ENCODE measurements at regions of chr16 and their contacts with region 1.

Region 1: GRCh38 chr16:50520451-50521245 is 27.5 kb upstream of the NKD1 start:
- DNase-seq: peak; percentile 99
- ATAC-seq: peak; percentile 94
- H3K4me3 ChIP-seq: no peak overlapping the region; a peak in 1 of 6 replicates
- H3K27ac ChIP-seq: peak overlapping the region; percentile 89
- H3K4me1 ChIP-seq: peaks cover 65% of the 10 kb centered on the region
- H3K27me3 ChIP-seq: no peaks in the 10 kb centered on the region
- CTCF ChIP-seq: no peak
- EP300 ChIP-seq: peak; percentile 98 to 100; a peak in 3 of 4 replicates
- POLR2A ChIP-seq: peak in 1 of 2 experiments; percentile 32; a peak in 2 of 4 replicates
- RAD21 ChIP-seq: no peak

Region 2: GRCh38 chr16:50425648-50426047 is 95.0 kb before region 1 on chr16:
- CTCF ChIA-PET with region 1: no interaction called
- POLR2A ChIA-PET with region 1: no interaction called
- in situ Hi-C with region 1: no loop called
- intact Hi-C with region 1: no loop called
- DNase-seq: no peak
- ATAC-seq: peak; percentile 53
- H3K4me3 ChIP-seq: peak overlapping the region in 1 of 3 experiments; percentile 7; a peak in 1 of 6 replicates
- H3K27ac ChIP-seq: no peak overlapping the region
- H3K4me1 ChIP-seq: peaks cover 32% of the 10 kb centered on the region
- H3K27me3 ChIP-seq: peaks cover 2 to 21% of the 10 kb centered on the region in 2 experiments; a peak in 4 of 5 replicates
- CTCF ChIP-seq: no peak
- EP300 ChIP-seq: no peak
- POLR2A ChIP-seq: no peak
- RAD21 ChIP-seq: no peak

Region 3: DNA sequence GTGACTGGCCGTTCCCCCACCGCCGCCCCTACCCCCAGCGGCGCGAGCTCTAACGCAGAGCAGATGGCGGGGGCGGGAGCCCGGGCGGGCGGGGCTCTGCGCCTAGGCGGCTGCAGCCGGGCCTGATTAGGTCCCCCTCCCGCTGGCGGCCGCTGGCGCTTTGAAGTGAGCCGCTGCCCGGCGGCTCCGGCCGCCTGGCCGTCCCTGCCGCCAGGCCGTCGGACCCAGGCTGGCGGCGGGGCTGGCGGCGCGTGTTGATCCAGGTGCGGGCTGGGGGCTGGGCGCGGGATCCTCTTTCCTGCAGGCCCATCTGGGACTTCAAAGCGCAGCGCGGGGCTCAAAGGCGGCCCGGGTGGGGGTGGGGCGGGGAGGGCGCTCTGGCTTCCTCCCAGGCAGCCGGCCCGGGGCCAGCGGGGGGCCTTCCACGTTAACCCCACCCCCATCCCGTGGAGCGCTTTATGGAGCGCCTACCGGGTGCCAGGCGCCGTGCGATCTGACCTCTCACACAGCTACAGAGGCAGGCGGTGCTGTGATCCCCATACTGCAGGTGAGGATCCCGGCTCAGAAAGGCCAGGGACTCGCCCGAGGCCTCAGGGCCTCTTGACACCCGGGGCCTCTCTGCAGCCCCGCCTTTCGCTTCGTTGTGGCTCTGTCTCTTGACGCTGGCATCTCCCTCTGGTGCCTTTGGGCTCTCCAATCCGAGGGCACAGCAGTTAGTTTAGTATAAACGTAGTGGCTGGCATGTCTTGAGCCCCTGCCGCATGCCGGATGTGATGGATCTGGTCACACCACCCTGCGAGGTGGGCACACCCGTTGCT is 52.5 kb before region 1 on chr16:
- CTCF ChIA-PET with region 1: no interaction called
- POLR2A ChIA-PET with region 1: interaction called, 66 read pairs
- in situ Hi-C with region 1: no loop called
- intact Hi-C with region 1: loop called (anchors 5 kb)
- DNase-seq: peak; percentile 97
- ATAC-seq: peak; percentile 89
- H3K4me3 ChIP-seq: peak overlapping the region in 2 of 3 experiments; percentile 11 to 24; a peak in 2 of 6 replicates
- H3K27ac ChIP-seq: peak overlapping the region; percentile 92
- H3K4me1 ChIP-seq: peaks cover 91% of the 10 kb centered on the region
- H3K27me3 ChIP-seq: no peaks in the 10 kb centered on the region
- CTCF ChIP-seq: peak; percentile 49
- EP300 ChIP-seq: peak; percentile 97 to 100
- POLR2A ChIP-seq: peak; percentile 63 to 67
- RAD21 ChIP-seq: peak; percentile 81

Region 4: GRCh38 chr16:50502616-50503011 is 18.0 kb before region 1 on chr16:
- CTCF ChIA-PET with region 1: no interaction called
- POLR2A ChIA-PET with region 1: interaction called, 143 read pairs
- in situ Hi-C with region 1: no loop called
- intact Hi-C with region 1: loop called (anchors 2 kb)
- DNase-seq: peak; percentile 87
- ATAC-seq: peak; percentile 45
- H3K4me3 ChIP-seq: no peak overlapping the region
- H3K27ac ChIP-seq: peak overlapping the region; percentile 51
- H3K4me1 ChIP-seq: peaks cover 94% of the 10 kb centered on the region
- H3K27me3 ChIP-seq: no peaks in the 10 kb centered on the region
- CTCF ChIP-seq: no peak
- EP300 ChIP-seq: peak in 1 of 2 experiments; percentile 79; a peak in 2 of 4 replicates
- POLR2A ChIP-seq: no peak
- RAD21 ChIP-seq: no peak

Region 5: DNA sequence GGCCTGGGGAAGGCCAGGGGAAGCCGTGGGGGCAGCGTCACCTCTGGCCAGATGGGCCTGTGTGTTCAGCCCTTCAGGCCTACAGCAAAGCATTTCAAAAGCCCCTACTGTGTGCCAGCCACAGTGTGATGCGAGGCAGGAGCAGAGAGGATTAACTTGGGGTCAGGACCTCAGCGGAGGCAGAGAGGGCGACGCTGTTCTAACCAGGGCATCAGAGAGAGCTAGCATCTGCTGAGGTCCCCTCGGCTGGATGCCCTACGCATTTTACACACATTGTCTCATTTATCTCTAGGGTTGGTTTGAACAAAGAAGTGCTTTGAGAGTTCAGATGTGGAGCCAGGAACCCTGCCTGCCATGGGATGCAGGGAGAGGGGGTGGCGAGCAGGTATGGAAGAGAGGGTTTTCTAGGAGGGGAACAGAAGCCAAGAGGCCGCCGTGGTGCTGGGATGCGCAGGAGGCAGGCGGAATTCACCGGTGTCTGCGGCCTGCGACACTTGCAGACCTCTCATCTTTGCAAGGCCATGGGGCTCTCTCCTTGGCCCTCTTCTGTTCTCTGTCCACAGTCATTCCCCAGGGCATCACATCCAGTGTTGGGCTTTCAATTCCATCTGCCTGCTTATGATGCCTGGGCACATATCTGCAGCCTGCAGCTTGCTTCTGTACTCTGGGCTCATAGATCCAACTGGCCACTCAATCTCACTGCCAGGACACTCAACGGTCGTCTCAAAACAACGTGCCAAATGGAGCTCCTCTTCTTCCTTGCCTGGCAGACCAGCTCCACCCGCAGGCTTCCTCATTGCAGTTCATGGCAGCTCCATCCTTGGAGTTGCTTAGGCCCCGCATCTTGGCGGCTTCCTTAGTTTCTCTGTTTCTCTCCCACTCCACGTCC is 19.4 kb after region 1 on chr16:
- CTCF ChIA-PET with region 1: no interaction called
- POLR2A ChIA-PET with region 1: interaction called, 53 read pairs
- in situ Hi-C with region 1: no loop called
- intact Hi-C with region 1: loop called (anchors 1 kb)
- DNase-seq: peak; percentile 52
- ATAC-seq: peak; percentile 12
- H3K4me3 ChIP-seq: 0 out of 6 replicates have a peak overlapping the region, but pooled peaks of 1 of the 3 experiments have one; percentile 17
- H3K27ac ChIP-seq: peak overlapping the region; percentile 88
- H3K4me1 ChIP-seq: peaks cover 72% of the 10 kb centered on the region
- H3K27me3 ChIP-seq: no peaks in the 10 kb centered on the region
- CTCF ChIP-seq: peak; percentile 72
- EP300 ChIP-seq: no peak
- POLR2A ChIP-seq: peak in 1 of 2 experiments; percentile 57; a peak in 1 of 4 replicates
- RAD21 ChIP-seq: peak; percentile 72

Region 6: GRCh38 chr16:50548125-50548908 is 27.7 kb after region 1 on chr16 and contains the start of gene NKD1:
- CTCF ChIA-PET with region 1: no interaction called
- POLR2A ChIA-PET with region 1: interaction called, 69 read pairs
- in situ Hi-C with region 1: no loop called
- intact Hi-C with region 1: loop called (anchors 2 kb)
- DNase-seq: peak; percentile 84
- ATAC-seq: peak; percentile 87
- H3K4me3 ChIP-seq: peak within 1 kb of the TSS; percentile 93 to 100 (median 98)
- H3K27ac ChIP-seq: peak within 1 kb of the TSS; percentile 88
- H3K4me1 ChIP-seq: peaks cover 62% of the 10 kb centered on the region
- H3K27me3 ChIP-seq: peaks cover 0 to 6% of the 10 kb centered on the region in 2 experiments; a peak in 1 of 5 replicates
- CTCF ChIP-seq: no peak
- EP300 ChIP-seq: peak in 1 of 2 experiments; percentile 4; a peak in 1 of 4 replicates
- POLR2A ChIP-seq: peak; percentile 93 to 95
- RAD21 ChIP-seq: peak; percentile 68
- total RNA-seq, gene NKD1: 59.0 and 70.4 TPM in 2 replicates

Measured in HepG2 (cell line).